Caco-2 (cell line): ENCODE measurements at regions of chr14 and their contacts with region 1.

Region 1: DNA sequence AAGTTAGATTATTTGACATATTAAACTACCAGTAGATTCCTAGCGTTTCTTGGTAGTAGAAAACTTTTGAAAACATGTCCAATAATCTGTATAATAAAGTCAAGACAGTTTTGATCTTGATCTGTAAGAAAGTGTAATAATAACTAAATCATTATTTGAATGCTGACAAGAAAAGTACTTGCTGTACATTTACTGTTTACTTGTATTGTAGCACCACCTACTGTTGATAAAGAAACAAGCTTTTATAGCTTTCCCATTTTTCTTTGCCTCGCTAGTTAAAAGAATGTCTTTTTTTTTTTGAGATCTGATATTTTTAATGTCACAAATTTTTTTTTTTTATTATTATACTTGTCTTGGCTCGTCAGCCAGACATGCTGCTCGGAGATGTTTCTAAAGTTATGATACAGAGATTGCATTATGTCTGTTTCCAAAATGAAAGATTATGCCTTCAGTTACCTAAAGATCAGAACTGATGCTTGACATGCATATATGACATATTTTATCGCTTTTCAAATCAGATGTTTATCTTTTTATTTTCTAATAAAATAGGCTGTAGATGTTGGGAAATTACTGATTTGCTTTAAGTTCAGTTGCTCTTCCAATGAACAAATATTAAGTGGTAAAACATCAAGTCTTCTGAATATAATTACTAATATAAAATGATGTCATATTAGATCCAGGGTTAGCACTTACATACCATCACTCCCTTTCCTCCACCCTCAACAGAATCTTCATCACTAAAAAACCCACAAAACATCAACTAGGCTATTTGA is 140.5 kb downstream of the AKAP6 start:
- DNase-seq: no peak
- H3K4me3 ChIP-seq: no peak overlapping the region
- H3K4me3 Mint-ChIP-seq: no peak overlapping the region
- H3K27ac Mint-ChIP-seq: no peak overlapping the region
- H3K4me1 ChIP-seq: peaks cover 39% of the 10 kb centered on the region
- H3K4me1 Mint-ChIP-seq: peaks cover 31% of the 10 kb centered on the region
- H3K27me3 ChIP-seq: no peaks in the 10 kb centered on the region
- H3K27me3 Mint-ChIP-seq: no peaks in the 10 kb centered on the region
- CTCF ChIP-seq: peak; percentile 41 to 51

Region 2: DNA sequence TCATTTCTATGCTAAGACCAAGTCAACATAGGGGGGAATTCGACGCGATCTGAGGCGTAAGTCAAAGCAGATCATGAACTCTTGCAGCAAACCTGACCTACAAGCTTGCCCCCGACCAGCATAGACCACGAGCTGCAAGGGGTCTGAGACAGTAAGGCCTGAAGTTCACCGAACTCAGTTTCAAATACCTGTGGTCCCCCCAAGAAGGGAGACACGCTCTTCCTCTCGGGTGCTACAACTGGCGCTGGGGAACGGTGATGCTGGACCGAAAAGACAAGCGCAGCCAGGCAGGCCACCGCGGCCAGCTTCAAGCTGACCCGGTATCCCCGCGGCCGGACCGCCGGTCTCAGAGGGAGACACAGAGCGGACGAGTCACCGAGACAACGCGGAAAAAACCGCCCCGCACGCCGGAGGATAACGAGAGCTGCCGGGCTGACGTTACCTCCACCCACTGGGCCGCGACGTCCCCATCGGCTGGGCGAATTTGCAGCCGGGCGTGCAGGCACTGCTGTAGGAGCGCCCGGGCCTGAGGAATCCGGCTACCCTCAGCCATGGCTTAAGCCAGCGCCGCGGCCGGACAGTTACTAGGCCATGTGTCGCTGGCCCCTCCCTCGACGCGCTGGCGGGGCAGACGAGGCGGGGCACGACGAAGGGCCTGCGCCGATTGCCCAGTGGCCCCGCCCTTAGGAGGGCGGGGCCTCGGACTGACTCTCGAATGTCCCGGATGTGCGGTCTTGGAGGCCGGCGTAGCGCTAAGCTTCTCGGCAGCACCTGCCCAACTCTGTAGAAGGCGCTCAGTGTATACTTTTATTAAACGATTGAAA is 1012.5 kb before region 1 on chr14 and contains the start of gene DTD2:
- CTCF ChIA-PET with region 1: no interaction called
- POLR2A ChIA-PET with region 1: no interaction called
- intact Hi-C with region 1: loop called (anchors 5 kb)
- DNase-seq: peak; percentile 94 to 95
- H3K4me3 ChIP-seq: peak within 1 kb of the TSS; percentile 60
- H3K4me3 Mint-ChIP-seq: peak within 1 kb of the TSS; percentile 92
- H3K27ac Mint-ChIP-seq: peak within 1 kb of the TSS; percentile 97
- H3K4me1 ChIP-seq: peaks cover 13% of the 10 kb centered on the region
- H3K4me1 Mint-ChIP-seq: peaks cover 25% of the 10 kb centered on the region
- H3K27me3 ChIP-seq: no peaks in the 10 kb centered on the region
- H3K27me3 Mint-ChIP-seq: no peaks in the 10 kb centered on the region
- CTCF ChIP-seq: no peak
- total RNA-seq, gene DTD2: 16.5 and 20.0 TPM in 2 replicates

Region 3: GRCh38 chr14:32076278-32077080 is 393.1 kb before region 1 on chr14:
- CTCF ChIA-PET with region 1: interaction called, 3 read pairs
- POLR2A ChIA-PET with region 1: no interaction called
- intact Hi-C with region 1: loop called (anchors 1 kb)
- DNase-seq: peak; percentile 97
- H3K4me3 ChIP-seq: peak overlapping the region; percentile 72
- H3K4me3 Mint-ChIP-seq: peak overlapping the region; percentile 87
- H3K27ac Mint-ChIP-seq: peak overlapping the region; percentile 77
- H3K4me1 ChIP-seq: peaks cover 34% of the 10 kb centered on the region
- H3K4me1 Mint-ChIP-seq: peaks cover 27% of the 10 kb centered on the region
- H3K27me3 ChIP-seq: no peaks in the 10 kb centered on the region
- H3K27me3 Mint-ChIP-seq: no peaks in the 10 kb centered on the region
- CTCF ChIP-seq: no peak

Region 4: GRCh38 chr14:32134448-32135070 is 335.0 kb before region 1 on chr14:
- CTCF ChIA-PET with region 1: no interaction called
- POLR2A ChIA-PET with region 1: no interaction called
- intact Hi-C with region 1: no loop called
- DNase-seq: no peak
- H3K4me3 ChIP-seq: no peak overlapping the region
- H3K4me3 Mint-ChIP-seq: no peak overlapping the region
- H3K27ac Mint-ChIP-seq: no peak overlapping the region
- H3K4me1 ChIP-seq: no peaks in the 10 kb centered on the region
- H3K4me1 Mint-ChIP-seq: peaks cover 10% of the 10 kb centered on the region
- H3K27me3 ChIP-seq: no peaks in the 10 kb centered on the region
- H3K27me3 Mint-ChIP-seq: no peaks in the 10 kb centered on the region
- CTCF ChIP-seq: no peak

Region 5: GRCh38 chr14:32202998-32203882 is 266.3 kb before region 1 on chr14 and contains the start of gene RNU6-8:
- CTCF ChIA-PET with region 1: interaction called, 3 read pairs
- POLR2A ChIA-PET with region 1: interaction called, 4 read pairs
- intact Hi-C with region 1: loop called (anchors 2 kb)
- DNase-seq: peak; percentile 95
- H3K4me3 ChIP-seq: peak within 1 kb of the TSS; percentile 76
- H3K4me3 Mint-ChIP-seq: peak within 1 kb of the TSS; percentile 90
- H3K27ac Mint-ChIP-seq: peak within 1 kb of the TSS; percentile 98
- H3K4me1 ChIP-seq: 0 out of 2 replicates have a peak, but pooled peaks cover 5% of the 10 kb centered on the region
- H3K4me1 Mint-ChIP-seq: no peaks in the 10 kb centered on the region
- H3K27me3 ChIP-seq: no peaks in the 10 kb centered on the region
- H3K27me3 Mint-ChIP-seq: no peaks in the 10 kb centered on the region
- CTCF ChIP-seq: no peak
- total RNA-seq, gene RNU6-8: not detected in 2 replicates

Region 6: DNA sequence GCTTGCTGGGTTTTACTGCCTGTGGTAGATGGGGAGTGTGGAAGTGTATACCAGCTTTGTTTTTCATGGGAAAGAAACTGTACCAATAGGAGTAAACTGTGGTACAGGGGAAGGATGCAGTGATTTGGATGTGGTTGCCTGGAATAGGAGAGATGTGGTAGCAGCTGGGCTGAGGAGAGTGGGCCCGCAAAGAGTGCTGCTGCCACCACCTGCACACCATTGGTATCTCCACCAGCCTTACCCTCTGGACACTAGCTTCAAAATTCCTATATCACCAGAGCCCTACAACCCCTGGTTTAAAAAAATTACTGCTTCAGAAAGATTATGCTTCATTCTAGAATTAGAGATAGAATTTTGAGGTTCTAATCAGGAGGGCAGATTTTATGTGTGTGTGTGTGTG is 86.9 kb before region 1 on chr14:
- CTCF ChIA-PET with region 1: no interaction called
- POLR2A ChIA-PET with region 1: no interaction called
- intact Hi-C with region 1: loop called (anchors 1 kb)
- DNase-seq: peak in 1 of 2 experiments; percentile 54
- H3K4me3 ChIP-seq: no peak overlapping the region
- H3K4me3 Mint-ChIP-seq: no peak overlapping the region
- H3K27ac Mint-ChIP-seq: no peak overlapping the region
- H3K4me1 ChIP-seq: peaks cover 64% of the 10 kb centered on the region
- H3K4me1 Mint-ChIP-seq: peaks cover 51% of the 10 kb centered on the region
- H3K27me3 ChIP-seq: no peaks in the 10 kb centered on the region
- H3K27me3 Mint-ChIP-seq: no peaks in the 10 kb centered on the region
- CTCF ChIP-seq: peak; percentile 23 to 63

Region 7: GRCh38 chr14:32513571-32514009 is 44.0 kb after region 1 on chr14:
- CTCF ChIA-PET with region 1: interaction called, 4 read pairs
- POLR2A ChIA-PET with region 1: no interaction called
- intact Hi-C with region 1: loop called (anchors 1 kb)
- DNase-seq: no peak
- H3K4me3 ChIP-seq: no peak overlapping the region
- H3K4me3 Mint-ChIP-seq: no peak overlapping the region
- H3K27ac Mint-ChIP-seq: no peak overlapping the region
- H3K4me1 ChIP-seq: peaks cover 20% of the 10 kb centered on the region
- H3K4me1 Mint-ChIP-seq: peaks cover 11% of the 10 kb centered on the region
- H3K27me3 ChIP-seq: no peaks in the 10 kb centered on the region
- H3K27me3 Mint-ChIP-seq: no peaks in the 10 kb centered on the region
- CTCF ChIP-seq: peak; percentile 38 to 48

Region 8: GRCh38 chr14:32560209-32560857 is 90.8 kb after region 1 on chr14:
- CTCF ChIA-PET with region 1: interaction called, 6 read pairs
- POLR2A ChIA-PET with region 1: no interaction called
- intact Hi-C with region 1: loop called (anchors 1 kb)
- DNase-seq: peak; percentile 59 to 71
- H3K4me3 ChIP-seq: no peak overlapping the region
- H3K4me3 Mint-ChIP-seq: no peak overlapping the region
- H3K27ac Mint-ChIP-seq: no peak overlapping the region
- H3K4me1 ChIP-seq: peaks cover 16% of the 10 kb centered on the region
- H3K4me1 Mint-ChIP-seq: no peaks in the 10 kb centered on the region
- H3K27me3 ChIP-seq: no peaks in the 10 kb centered on the region
- H3K27me3 Mint-ChIP-seq: no peaks in the 10 kb centered on the region
- CTCF ChIP-seq: peak; percentile 77 to 79

Region 9: DNA sequence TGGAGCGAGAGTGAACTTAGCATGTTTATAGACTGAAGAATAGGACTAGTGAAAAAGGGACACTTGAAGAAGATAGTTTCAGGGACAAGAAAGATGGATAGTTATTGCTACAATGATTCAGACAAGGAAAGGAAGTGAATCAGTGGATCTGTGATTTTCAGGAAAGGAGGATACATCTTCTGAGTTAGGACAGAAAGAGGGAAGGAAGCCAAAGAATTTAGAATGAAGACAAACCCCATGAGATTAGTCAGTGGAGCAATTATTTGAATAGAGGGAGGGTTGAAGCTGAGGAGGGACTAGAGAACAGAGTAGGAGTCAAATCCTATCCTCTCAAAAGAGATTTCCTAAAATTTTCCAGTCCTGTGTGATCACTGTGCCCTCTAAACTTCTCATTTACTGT is 142.2 kb after region 1 on chr14:
- CTCF ChIA-PET with region 1: no interaction called
- POLR2A ChIA-PET with region 1: no interaction called
- intact Hi-C with region 1: no loop called
- DNase-seq: no peak
- H3K4me3 ChIP-seq: no peak overlapping the region
- H3K4me3 Mint-ChIP-seq: no peak overlapping the region
- H3K27ac Mint-ChIP-seq: no peak overlapping the region
- H3K4me1 ChIP-seq: no peaks in the 10 kb centered on the region
- H3K4me1 Mint-ChIP-seq: no peaks in the 10 kb centered on the region
- H3K27me3 ChIP-seq: no peaks in the 10 kb centered on the region
- H3K27me3 Mint-ChIP-seq: no peaks in the 10 kb centered on the region
- CTCF ChIP-seq: no peak